ENCODE measurements at regions of chr9 and their contacts with region 1.

Region 1: DNA sequence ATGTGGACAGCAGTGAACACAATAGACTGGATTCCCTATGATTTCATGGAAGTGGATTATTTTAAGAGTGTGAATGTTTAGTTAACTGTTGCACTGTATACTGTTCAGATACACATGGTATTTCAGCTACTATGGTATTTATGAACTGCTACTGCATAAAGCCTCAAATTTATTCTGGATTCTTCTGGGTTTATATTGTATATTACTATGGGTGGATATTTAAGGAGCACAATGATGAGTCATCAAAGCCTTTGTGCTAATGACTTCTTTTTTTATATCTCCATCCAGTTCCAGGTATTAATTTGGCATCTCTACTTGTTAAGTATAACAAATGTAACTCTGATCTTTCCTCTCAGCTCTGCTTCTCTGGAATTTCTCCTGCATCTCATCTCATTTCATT is 6.8 kb downstream of the KDM4C start:
- DNase-seq: no peak
- ATAC-seq: no peak
- H3K4me3 ChIP-seq: no peak overlapping the region
- H3K4me3 Mint-ChIP-seq: no peak overlapping the region
- H3K27ac ChIP-seq: no peak overlapping the region
- H3K27ac Mint-ChIP-seq: peak overlapping the region; percentile 16
- H3K4me1 ChIP-seq: peaks cover 14% of the 10 kb centered on the region
- H3K4me1 Mint-ChIP-seq: peaks cover 51% of the 10 kb centered on the region
- H3K27me3 ChIP-seq: no peaks in the 10 kb centered on the region
- H3K27me3 Mint-ChIP-seq: no peaks in the 10 kb centered on the region
- CTCF ChIP-seq: no peak

Region 2: GRCh38 chr9:6811436-6811835 is 46.9 kb after region 1 on chr9:
- CTCF ChIA-PET with region 1: no interaction called
- POLR2A ChIA-PET with region 1: no interaction called
- intact Hi-C with region 1: loop called in 1 of 2 experiments (anchors 10 kb)
- DNase-seq: no peak
- ATAC-seq: no peak
- H3K4me3 ChIP-seq: no peak overlapping the region
- H3K4me3 Mint-ChIP-seq: no peak overlapping the region
- H3K27ac ChIP-seq: no peak overlapping the region
- H3K27ac Mint-ChIP-seq: no peak overlapping the region
- H3K4me1 ChIP-seq: no peaks in the 10 kb centered on the region
- H3K4me1 Mint-ChIP-seq: peaks cover 18% of the 10 kb centered on the region
- H3K27me3 ChIP-seq: no peaks in the 10 kb centered on the region
- H3K27me3 Mint-ChIP-seq: no peaks in the 10 kb centered on the region
- CTCF ChIP-seq: no peak

Region 3: DNA sequence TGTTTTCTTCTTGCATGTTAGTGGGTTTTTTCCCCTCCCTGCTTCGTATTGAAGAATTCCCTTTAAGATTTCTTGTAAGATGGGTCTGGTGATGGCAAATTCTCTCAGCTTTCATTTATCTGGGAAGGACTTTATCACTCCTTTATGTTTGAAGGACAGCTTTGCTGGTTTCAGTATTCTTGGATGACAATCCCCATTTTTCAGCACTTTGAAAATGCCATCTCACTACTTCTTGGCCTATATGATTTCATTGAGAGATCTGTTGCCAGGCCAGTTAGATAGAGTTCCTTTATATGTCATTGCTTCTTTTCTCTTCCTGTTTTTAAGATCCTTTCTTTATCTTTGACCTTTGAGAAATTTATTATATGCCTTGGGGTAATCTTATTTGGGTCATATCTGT is 99.6 kb after region 1 on chr9:
- CTCF ChIA-PET with region 1: no interaction called
- POLR2A ChIA-PET with region 1: no interaction called
- intact Hi-C with region 1: no loop called
- DNase-seq: no peak
- ATAC-seq: no peak
- H3K4me3 ChIP-seq: no peak overlapping the region
- H3K4me3 Mint-ChIP-seq: no peak overlapping the region
- H3K27ac ChIP-seq: no peak overlapping the region
- H3K27ac Mint-ChIP-seq: no peak overlapping the region
- H3K4me1 ChIP-seq: peaks cover 1% of the 10 kb centered on the region
- H3K4me1 Mint-ChIP-seq: peaks cover 23% of the 10 kb centered on the region
- H3K27me3 ChIP-seq: no peaks in the 10 kb centered on the region
- H3K27me3 Mint-ChIP-seq: no peaks in the 10 kb centered on the region
- CTCF ChIP-seq: no peak

Measured in CD4-positive, alpha-beta T cell (primary cell).